Ascending aorta (tissue), 2 donors: ENCODE measurements at regions of chr5 and their contacts with region 1.

Region 1: DNA sequence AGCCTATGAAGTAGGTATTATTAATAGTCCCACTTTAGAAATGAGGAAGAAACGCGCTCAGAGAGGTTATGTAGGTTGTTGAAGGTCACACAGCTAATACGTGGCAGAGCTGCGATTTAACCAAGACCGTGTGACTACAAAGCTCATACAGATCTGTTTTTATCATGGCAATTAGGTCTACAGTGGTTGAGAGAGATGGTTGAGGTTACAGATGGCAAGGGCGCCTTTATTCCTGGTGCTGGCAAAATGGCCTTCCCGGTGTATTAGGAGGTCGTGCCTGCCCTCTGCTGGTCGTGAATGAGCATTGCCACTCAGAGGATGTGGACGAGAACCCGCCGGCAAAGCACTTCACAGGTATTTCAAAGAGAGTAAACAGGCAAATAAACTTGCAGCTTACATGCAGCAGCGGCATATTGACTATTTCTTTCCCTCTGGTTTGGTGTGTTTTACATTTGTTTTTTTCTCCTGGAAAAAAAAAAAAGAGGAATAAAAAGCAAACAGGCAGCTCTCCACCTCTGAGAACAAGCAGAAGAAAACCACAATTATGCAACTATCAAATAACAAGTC is 65.3 kb upstream of the EGFLAM start:
- DNase-seq: peak; percentile 9 to 73
- H3K4me3 ChIP-seq: no peak overlapping the region
- H3K27ac ChIP-seq: no peak overlapping the region
- H3K4me1 ChIP-seq: no peaks in the 10 kb centered on the region
- H3K27me3 ChIP-seq: no peaks in the 10 kb centered on the region
- CTCF ChIP-seq: peak; percentile 57 to 73 (median 72)

Region 2: GRCh38 chr5:37412515-37413277 is 780.4 kb before region 1 on chr5:
- intact Hi-C with region 1: loop called (anchors 2 kb)
- DNase-seq: peak in 1 of 2 donors; percentile 67
- H3K4me3 ChIP-seq: no peak overlapping the region
- H3K27ac ChIP-seq: no peak overlapping the region
- H3K4me1 ChIP-seq: no peaks in the 10 kb centered on the region
- H3K27me3 ChIP-seq: no peaks in the 10 kb centered on the region
- CTCF ChIP-seq: peak; percentile 36 to 78 (median 74)

Region 3: DNA sequence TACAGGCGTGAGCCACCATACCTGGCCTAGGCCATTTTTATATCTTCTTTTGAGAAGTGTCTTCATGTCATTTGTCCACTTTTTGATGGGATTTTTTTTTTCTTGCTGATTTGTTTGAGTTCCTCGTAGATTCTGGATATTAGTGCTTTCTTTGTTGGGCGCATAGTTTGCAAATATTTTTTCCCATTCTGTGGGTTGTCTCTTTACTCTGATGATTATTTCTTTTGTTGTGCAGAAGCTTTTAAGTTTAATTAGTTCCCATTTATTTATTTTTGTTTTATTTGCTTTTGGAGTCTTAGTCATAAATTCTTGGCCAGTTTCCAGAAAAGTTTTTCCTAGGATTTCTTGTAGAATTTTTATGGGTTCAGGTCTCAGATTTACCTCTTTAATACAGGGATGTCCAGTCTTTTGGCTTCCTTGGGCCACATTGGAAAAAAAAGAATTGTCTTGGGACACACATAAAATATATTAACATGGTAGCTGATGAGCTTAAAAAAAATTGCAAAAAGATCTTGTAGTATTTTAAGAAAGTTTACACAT is 692.0 kb before region 1 on chr5:
- intact Hi-C with region 1: loop called (anchors 10 kb)
- DNase-seq: no peak
- H3K4me3 ChIP-seq: no peak overlapping the region
- H3K27ac ChIP-seq: no peak overlapping the region
- H3K4me1 ChIP-seq: no peaks in the 10 kb centered on the region
- H3K27me3 ChIP-seq: no peaks in the 10 kb centered on the region
- CTCF ChIP-seq: no peak

Region 4: DNA sequence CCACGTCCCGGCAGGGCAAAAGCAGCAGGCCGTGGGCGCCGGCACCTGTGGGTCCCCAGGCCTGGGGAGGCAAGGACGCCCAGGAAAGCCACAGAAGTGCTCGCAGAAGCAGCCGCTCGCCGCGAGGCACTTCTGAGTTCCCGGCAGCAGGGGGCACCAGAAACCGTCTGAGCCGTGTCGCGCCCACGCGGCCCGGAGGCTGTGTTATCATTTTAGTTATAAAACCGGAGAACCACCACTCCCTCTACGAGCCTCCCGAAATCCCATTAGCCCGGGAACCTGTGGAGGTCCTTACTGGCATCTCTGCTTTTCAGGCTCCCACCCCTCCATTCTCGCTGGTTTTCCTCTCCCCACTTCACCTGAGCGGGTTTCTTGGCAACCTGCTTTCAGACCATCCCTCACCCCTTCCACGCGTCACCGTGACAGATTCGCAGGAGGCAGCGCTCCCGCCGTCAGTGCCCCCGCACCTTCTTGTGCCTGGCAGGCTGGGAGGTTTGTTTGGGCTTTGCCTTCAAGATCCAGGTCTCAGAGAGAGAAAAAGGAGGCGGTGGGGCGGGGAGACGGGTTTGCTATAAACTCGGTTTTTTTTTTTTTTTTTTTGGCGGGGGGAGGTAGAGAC is 355.6 kb before region 1 on chr5:
- intact Hi-C with region 1: loop called (anchors 1 kb)
- DNase-seq: peak in 1 of 2 donors; percentile 77
- H3K4me3 ChIP-seq: peak overlapping the region; percentile 52 to 57
- H3K27ac ChIP-seq: no peak overlapping the region
- H3K4me1 ChIP-seq: peaks cover 0 to 32% of the 10 kb centered on the region in 2 donors
- H3K27me3 ChIP-seq: peaks cover 12% of the 10 kb centered on the region
- CTCF ChIP-seq: peak; percentile 47 to 74 (median 59)